PC-3 (cell line): ENCODE measurements at regions of chr1 and their contacts with region 1.

Region 1: GRCh38 chr1:183139281-183139942 is 46.7 kb upstream of the LAMC2 start:
- DNase-seq: peak; percentile 85
- ATAC-seq: peak; percentile 87
- H3K4me3 ChIP-seq: peak overlapping the region; percentile 26; the same call in 1 of the 2 replicates
- H3K27ac ChIP-seq: peak overlapping the region; percentile 96
- H3K4me1 ChIP-seq: peaks cover 31% of the 10 kb centered on the region
- H3K27me3 ChIP-seq: no peaks in the 10 kb centered on the region
- CTCF ChIP-seq: no peak

Region 2: DNA sequence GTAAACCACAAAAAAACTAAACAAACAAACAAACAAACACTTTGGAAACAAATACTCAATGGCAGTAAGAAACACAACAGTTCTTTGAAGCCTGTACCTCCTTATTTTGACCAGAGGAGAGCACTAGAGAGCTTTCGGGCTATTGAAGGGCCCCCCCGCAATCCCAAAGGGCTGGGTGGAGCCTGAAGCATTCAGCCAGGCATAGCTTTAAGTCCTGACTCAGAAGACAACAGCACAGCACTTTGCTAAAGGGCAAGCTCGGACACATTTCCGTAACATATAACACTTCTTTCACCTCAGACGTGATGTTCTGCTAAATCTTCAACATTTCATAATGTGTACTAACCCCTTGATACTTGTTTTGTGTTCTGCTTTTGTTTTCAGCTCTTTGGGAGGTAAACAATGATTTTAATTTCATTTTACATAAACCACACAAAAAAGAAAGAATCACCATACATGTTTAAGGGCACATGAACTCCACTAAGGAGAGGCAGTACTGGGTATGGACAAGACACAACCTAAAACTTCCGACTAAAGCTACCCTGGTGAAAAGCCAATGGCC is 176.8 kb before region 1 on chr1:
- CTCF ChIA-PET with region 1: no interaction called
- POLR2A ChIA-PET with region 1: no interaction called
- intact Hi-C with region 1: loop called (anchors 10 kb)
- DNase-seq: peak; percentile 80
- ATAC-seq: peak; percentile 100
- H3K4me3 ChIP-seq: peak overlapping the region; percentile 60
- H3K27ac ChIP-seq: peak overlapping the region; percentile 43
- H3K4me1 ChIP-seq: peaks cover 5% of the 10 kb centered on the region
- H3K27me3 ChIP-seq: no peaks in the 10 kb centered on the region
- CTCF ChIP-seq: peak; percentile 90

Region 3: GRCh38 chr1:183159960-183160359 is 20.5 kb after region 1 on chr1:
- CTCF ChIA-PET with region 1: no interaction called
- POLR2A ChIA-PET with region 1: no interaction called
- intact Hi-C with region 1: loop called (anchors 1 kb)
- DNase-seq: peak; percentile 98
- ATAC-seq: peak; percentile 74
- H3K4me3 ChIP-seq: no peak overlapping the region
- H3K27ac ChIP-seq: peak overlapping the region; percentile 98
- H3K4me1 ChIP-seq: peaks cover 63% of the 10 kb centered on the region
- H3K27me3 ChIP-seq: no peaks in the 10 kb centered on the region
- CTCF ChIP-seq: no peak

Region 4: GRCh38 chr1:183291802-183292514 is 152.5 kb after region 1 on chr1:
- CTCF ChIA-PET with region 1: no interaction called
- POLR2A ChIA-PET with region 1: no interaction called
- intact Hi-C with region 1: no loop called
- DNase-seq: no peak
- ATAC-seq: no peak
- H3K4me3 ChIP-seq: no peak overlapping the region
- H3K27ac ChIP-seq: no peak overlapping the region
- H3K4me1 ChIP-seq: no peaks in the 10 kb centered on the region
- H3K27me3 ChIP-seq: no peaks in the 10 kb centered on the region
- CTCF ChIP-seq: no peak